HEK293 (cell line): ENCODE measurements at regions of chr15 and their contacts with region 1.

Region 1: DNA sequence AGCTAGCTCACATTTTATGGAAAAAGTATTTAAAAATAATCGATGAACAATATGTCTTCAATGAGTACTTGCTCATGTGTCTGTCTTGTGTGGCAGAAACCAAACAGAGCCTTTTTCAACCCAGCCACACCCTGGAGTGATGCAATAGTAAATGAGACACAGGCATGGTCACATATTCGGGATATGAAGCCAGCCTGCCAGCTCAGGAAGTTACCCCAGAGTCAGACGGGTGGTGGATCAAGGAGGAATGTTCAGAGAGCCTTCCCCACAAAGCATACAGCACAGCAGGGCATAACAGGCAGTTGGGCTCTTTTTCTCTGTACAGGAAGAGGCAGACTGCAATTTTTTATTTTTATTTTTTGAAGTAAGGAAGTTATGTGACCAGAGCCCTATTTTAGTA is 27.3 kb downstream of the LARP6 start:
- H3K4me3 ChIP-seq: no peak overlapping the region
- H3K27ac ChIP-seq: no peak overlapping the region; the same call in 1 of the 2 replicates
- H3K4me1 ChIP-seq: peaks cover 4% of the 10 kb centered on the region; the same call in 1 of the 2 replicates
- CTCF ChIP-seq: no peak

Region 2: DNA sequence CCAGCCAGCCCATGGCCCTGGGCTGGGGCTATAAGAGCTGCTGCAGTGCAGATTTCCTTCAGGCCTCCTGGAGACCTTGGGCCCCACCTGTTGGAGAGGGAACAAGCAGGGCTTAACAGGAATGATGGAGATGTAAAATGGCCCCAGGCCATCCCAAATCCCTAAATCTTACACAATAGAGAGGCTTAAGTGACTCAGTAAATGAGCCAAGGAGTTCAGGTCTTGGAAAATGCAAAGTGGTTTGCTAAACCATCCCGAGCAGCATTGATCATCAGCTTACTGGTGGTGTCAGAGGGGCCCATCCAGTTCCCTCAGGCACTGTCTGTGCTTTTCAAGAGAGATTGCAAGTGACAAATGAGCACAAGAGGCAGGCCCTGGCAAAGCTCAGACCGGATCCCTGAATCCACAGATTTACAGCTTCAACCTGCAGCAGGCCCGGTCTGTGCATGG is 388.7 kb before region 1 on chr15:
- CTCF ChIA-PET with region 1: no interaction called
- POLR2A ChIA-PET with region 1: no interaction called
- H3K4me3 ChIP-seq: no peak overlapping the region
- H3K27ac ChIP-seq: no peak overlapping the region
- H3K4me1 ChIP-seq: peaks cover 3% of the 10 kb centered on the region; the same call in 1 of the 2 replicates
- CTCF ChIP-seq: no peak

Region 3: DNA sequence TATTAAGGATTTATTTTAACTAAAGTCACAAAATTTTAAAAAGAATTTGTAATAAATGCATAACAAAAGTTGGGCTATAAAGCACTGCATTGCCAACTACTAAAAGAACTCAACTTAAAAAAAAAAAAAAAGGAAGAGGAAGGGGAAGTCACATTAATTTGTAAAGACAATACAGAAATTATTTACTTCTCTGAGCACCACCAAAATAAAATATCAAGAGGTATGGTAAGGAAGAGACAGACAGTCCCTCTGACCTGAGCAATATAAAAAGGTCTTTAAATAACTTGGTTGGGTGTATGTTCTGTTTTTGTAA is 146.8 kb before region 1 on chr15:
- CTCF ChIA-PET with region 1: interaction called, 17 read pairs
- POLR2A ChIA-PET with region 1: no interaction called
- H3K4me3 ChIP-seq: no peak overlapping the region
- H3K27ac ChIP-seq: no peak overlapping the region
- H3K4me1 ChIP-seq: no peaks in the 10 kb centered on the region
- CTCF ChIP-seq: no peak

Region 4: DNA sequence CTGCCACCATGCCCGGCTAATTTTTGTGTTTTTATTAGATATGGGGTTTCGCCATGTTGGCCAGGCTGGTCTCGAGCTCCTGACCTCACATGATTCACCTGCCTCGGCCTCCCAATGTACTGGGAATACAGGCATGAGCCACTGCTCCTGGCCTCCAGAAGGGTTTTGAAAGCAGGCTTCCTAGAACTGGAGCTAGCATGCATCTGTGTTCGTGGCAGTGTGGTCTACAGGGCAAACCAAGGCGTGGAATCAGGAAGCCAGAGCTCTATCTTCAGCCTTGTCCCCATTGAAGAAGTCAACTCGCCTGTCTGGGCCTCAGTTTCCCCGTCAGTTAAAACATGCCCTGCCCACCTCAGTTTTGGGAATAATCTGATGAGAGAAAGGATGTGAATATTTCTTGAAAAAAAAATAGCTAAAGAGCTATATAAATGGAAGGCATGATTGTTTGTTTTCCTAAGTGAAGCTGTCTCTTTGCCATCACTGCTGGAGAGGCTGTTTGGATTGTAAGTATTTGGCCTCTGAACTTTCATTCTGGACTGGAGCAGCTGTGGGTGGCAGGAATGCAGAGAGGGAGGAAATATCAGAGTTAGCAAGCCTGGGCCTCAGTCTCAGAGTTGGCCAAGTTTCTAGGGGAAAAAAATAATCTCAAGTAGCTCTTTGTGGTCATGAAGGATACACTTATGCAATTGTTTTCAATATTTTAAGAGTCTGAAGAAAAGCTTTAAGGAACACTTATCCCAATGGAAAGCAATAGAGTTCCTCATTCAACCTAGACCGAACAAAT is 26.8 kb before region 1 on chr15:
- CTCF ChIA-PET with region 1: interaction called, 12 read pairs
- POLR2A ChIA-PET with region 1: no interaction called
- H3K4me3 ChIP-seq: no peak overlapping the region
- H3K27ac ChIP-seq: no peak overlapping the region
- H3K4me1 ChIP-seq: peaks cover 4% of the 10 kb centered on the region; the same call in 1 of the 2 replicates
- CTCF ChIP-seq: no peak

Region 5: GRCh38 chr15:70870051-70870450 is 43.4 kb after region 1 on chr15:
- CTCF ChIA-PET with region 1: interaction called, 70 read pairs
- POLR2A ChIA-PET with region 1: interaction called, 3 read pairs
- H3K4me3 ChIP-seq: no peak overlapping the region
- H3K27ac ChIP-seq: no peak overlapping the region
- H3K4me1 ChIP-seq: peaks cover 8% of the 10 kb centered on the region
- CTCF ChIP-seq: no peak